Activated naive CD4-positive, alpha-beta T cell treated with anti-CD3 and anti-CD28 coated beads for 36 hours (primary cell): ENCODE measurements at regions of chr3 and their contacts with region 1.

Region 1: DNA sequence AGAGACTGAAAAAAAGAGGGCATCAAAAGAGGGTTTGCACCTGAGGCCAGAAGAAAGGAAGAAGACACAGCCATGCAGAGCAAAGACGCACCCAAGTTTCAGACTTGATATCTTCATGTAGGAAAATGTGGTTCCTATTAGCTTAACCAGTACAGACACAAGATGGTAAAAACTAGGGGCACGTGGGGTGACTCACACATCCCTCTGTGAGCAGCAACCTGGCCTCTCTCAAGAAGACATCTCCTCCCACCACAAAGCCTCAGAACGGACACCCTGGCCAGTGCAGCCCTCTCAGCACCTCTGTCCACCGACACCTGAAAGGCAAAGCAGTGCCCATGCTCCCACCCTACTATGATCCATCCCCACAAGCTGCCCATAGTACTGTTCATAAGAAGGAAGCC is 33.3 kb downstream of the GLB1 start:
- DNase-seq: peak; percentile 86
- H3K4me3 Mint-ChIP-seq: no peak overlapping the region
- H3K27ac Mint-ChIP-seq: peak overlapping the region; percentile 93
- H3K4me1 Mint-ChIP-seq: peaks cover 57% of the 10 kb centered on the region
- H3K27me3 Mint-ChIP-seq: no peaks in the 10 kb centered on the region

Region 2: DNA sequence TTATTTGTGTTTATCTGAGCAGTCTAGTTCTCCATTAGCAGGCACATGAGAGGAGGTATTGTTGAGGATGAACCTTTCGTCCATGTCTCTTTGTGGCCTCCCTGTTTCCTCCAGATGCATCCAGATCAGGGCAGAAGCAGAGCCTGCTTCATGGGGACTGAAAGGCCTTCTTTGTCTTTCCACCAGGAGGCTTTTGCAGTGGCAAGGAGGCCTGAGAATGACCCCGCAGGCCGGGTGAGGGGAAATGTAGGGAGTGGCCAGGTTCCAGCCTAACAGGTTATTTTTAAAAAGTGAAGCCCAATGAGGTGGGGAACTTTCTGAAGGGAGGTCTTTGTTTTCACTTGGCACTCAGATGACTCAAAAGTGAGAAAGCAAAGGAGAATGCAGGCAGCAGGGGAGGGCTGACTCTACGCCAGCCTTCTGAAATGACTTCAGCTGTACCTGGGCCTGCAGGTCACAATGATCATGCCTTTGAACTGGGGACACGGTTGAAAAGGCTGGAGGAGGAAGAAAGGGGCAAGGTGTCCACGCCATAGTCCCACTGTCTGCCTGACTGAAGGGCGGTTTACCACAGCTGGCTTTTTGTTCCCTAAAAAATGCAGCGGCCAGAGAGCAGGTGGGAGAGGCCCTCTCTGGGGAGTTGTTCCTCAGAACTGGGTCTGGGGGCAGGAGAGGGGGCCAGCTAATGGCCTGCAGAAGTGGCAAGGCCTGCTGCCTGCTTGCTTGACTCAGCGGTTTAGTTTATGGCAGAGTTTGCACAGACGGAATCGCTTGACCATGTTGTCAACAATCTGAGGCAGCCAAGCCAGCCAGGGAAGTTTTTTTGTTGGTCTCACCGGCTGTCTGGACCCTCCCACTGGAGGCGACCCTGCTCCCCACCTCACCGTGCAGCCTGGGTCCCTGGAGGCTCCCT is 643.3 kb before region 1 on chr3:
- CTCF ChIA-PET with region 1: no interaction called
- intact Hi-C with region 1: loop called (anchors 5 kb)
- DNase-seq: peak; percentile 81
- H3K4me3 Mint-ChIP-seq: peak overlapping the region; percentile 66
- H3K27ac Mint-ChIP-seq: peak overlapping the region; percentile 94
- H3K4me1 Mint-ChIP-seq: peaks cover 92% of the 10 kb centered on the region
- H3K27me3 Mint-ChIP-seq: no peaks in the 10 kb centered on the region

Region 3: GRCh38 chr3:32947789-32948238 is 115.8 kb before region 1 on chr3:
- CTCF ChIA-PET with region 1: interaction called, 12 read pairs
- intact Hi-C with region 1: loop called (anchors 1 kb)
- DNase-seq: peak; percentile 99
- H3K4me3 Mint-ChIP-seq: no peak overlapping the region
- H3K27ac Mint-ChIP-seq: no peak overlapping the region
- H3K4me1 Mint-ChIP-seq: peaks cover 38% of the 10 kb centered on the region
- H3K27me3 Mint-ChIP-seq: no peaks in the 10 kb centered on the region

Region 4: GRCh38 chr3:33023172-33024136 is 40.2 kb before region 1 on chr3:
- CTCF ChIA-PET with region 1: interaction called, 5 read pairs
- intact Hi-C with region 1: loop called (anchors 1 kb)
- DNase-seq: no peak
- H3K4me3 Mint-ChIP-seq: peak overlapping the region; percentile 32
- H3K27ac Mint-ChIP-seq: peak overlapping the region; percentile 81
- H3K4me1 Mint-ChIP-seq: peaks cover 46% of the 10 kb centered on the region
- H3K27me3 Mint-ChIP-seq: no peaks in the 10 kb centered on the region

Region 5: DNA sequence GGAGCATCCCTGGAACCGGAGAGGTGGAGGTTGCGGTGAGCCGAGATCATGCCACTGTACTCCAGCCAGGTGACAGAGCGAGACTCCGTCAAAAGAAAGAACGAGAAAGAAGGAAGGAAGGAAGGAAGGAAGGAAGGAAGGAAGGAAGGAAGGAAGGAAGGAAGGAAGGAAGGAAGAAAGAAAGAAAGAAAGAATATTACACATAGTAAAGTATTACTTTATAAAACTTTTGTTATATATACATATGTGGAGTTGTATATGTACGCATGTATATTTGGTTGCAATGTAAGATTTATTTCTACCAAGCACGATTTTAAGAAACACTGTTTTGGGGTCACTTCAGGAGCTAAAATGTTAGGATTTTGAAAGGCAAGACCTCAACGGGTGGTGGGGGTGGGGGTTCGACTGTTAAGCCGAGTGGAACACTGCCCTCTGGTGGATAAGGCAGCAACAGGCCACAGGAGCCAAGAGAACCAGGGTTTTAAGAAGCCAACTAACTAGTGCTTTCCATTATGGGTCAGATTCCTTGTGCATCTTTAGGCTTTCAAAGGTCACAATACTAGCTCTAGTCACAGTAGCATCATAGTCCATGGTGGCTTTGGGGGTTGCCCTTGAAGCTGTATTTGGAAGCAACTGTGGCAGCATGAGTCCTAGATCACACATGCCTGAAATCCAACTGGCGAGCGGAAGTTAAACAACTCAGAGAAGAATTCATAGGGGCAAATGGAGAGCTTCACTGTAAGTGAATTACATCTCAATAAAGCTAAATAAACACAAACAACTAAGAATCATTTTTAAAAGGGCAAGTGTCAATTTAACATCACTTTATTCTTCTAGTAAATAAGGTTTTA is 10.8 kb after region 1 on chr3:
- CTCF ChIA-PET with region 1: interaction called, 14 read pairs
- intact Hi-C with region 1: loop called (anchors 1 kb)
- DNase-seq: peak; percentile 84
- H3K4me3 Mint-ChIP-seq: no peak overlapping the region
- H3K27ac Mint-ChIP-seq: no peak overlapping the region
- H3K4me1 Mint-ChIP-seq: peaks cover 11% of the 10 kb centered on the region
- H3K27me3 Mint-ChIP-seq: no peaks in the 10 kb centered on the region

Region 6: DNA sequence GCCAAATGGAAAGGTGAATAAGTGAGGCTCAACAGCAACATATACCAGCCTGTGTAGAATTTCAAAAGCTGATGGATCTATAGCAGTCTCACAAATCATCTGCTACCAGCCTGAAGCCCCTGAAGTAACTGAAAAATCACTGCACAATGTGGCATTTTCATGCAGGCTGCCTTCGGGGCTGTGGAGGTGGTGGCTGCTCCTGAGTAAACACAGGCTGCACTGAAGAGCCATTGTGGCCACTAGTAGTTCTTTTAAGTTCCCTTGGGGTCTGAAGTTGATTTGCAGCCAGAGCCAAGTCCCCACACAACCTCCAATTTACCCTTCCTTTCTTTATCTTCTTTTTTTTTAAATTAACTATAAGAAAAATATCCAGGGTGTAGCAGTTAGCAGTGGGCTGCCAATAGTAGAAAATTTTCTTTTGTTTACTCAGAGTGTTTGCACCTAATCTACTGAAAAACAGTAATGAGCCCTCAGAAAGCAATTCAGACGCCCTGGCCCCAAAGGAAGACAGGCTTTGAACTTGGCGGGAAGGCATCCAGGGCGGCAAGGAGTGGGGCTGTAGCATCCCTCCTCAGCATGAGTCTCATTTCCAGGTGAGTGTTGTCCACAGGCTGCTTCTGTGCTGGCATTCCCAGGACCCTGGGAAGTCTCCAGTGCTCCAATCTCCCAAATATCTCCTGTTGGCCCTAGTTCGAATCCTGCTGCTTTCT is 168.3 kb after region 1 on chr3:
- CTCF ChIA-PET with region 1: no interaction called
- intact Hi-C with region 1: no loop called
- DNase-seq: no peak
- H3K4me3 Mint-ChIP-seq: no peak overlapping the region
- H3K27ac Mint-ChIP-seq: no peak overlapping the region
- H3K4me1 Mint-ChIP-seq: no peaks in the 10 kb centered on the region
- H3K27me3 Mint-ChIP-seq: peaks cover 21% of the 10 kb centered on the region

Region 7: GRCh38 chr3:33372218-33373081 is 308.8 kb after region 1 on chr3:
- CTCF ChIA-PET with region 1: no interaction called
- intact Hi-C with region 1: loop called (anchors 5 kb)
- DNase-seq: peak; percentile 62
- H3K4me3 Mint-ChIP-seq: no peak overlapping the region
- H3K27ac Mint-ChIP-seq: no peak overlapping the region
- H3K4me1 Mint-ChIP-seq: peaks cover 5% of the 10 kb centered on the region
- H3K27me3 Mint-ChIP-seq: peaks cover 11% of the 10 kb centered on the region